ENCODE measurements at regions of chr9 and their contacts with region 1.

Region 1: DNA sequence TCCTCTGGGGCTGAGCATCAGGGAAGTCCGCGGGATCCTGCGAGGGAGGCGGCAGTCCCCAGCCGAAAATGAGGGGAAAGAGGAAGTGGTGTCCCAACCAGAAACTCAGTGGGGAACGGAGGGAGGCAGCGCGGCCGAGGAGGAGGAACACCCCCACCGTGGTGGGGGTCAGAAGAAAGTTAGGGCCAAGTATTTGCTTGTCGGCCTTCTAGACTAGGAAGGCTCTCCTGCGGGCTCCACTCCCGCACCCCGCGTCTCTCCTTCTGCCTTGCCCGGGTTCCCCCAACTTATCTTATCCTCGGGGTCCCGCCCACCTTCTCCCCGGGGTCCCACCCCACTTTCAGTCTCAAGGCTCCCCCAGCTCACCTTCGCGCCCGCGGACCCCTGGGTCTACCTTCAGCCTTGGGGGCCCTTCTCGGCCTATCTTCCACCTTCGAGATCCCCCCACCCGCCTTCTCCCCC is 557 bp upstream of the PHF2 start:
- DNase-seq: peak; percentile 61
- H3K4me3 Mint-ChIP-seq: peak overlapping the region; percentile 88
- H3K27ac Mint-ChIP-seq: peak overlapping the region; percentile 88
- H3K4me1 Mint-ChIP-seq: peaks cover 30% of the 10 kb centered on the region
- H3K27me3 Mint-ChIP-seq: no peaks in the 10 kb centered on the region

Region 2: DNA sequence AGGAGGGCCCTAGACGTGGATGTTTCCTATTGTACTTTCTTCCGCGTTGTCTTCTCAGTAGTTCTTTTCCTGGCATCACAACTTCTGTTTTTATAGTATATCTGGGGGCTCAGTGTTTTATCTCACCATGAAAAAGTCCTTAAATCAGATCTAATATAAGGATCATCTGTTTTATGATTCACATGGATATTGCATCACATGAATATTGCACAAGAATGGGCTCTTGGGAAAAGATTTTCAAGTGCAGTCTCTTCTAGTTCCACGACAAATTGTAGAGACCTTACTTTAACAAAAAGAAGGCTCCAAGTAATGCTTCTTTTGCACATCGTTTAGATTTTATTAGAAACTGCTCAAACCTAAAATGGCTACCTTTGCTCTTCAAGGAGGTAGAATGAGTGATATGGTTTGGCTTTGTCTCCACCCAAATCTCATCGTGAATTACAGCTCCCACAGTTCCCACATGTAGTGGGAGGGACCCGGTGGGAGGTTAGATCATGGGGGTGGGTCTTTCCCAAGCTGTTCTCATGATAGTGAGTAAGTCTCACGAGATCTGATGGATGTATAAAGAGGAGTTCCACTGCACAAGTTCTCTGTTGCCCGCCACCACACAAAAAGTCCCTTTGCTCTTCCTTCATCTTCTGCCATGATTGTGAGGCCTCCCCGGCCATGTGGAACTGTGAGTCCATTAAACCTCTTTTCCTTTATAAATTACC is 178.0 kb before region 1 on chr9:
- CTCF ChIA-PET with region 1: no interaction called
- POLR2A ChIA-PET with region 1: no interaction called
- intact Hi-C with region 1: no loop called
- DNase-seq: no peak
- H3K4me3 Mint-ChIP-seq: no peak overlapping the region
- H3K27ac Mint-ChIP-seq: no peak overlapping the region
- H3K4me1 Mint-ChIP-seq: no peaks in the 10 kb centered on the region
- H3K27me3 Mint-ChIP-seq: no peaks in the 10 kb centered on the region

Region 3: DNA sequence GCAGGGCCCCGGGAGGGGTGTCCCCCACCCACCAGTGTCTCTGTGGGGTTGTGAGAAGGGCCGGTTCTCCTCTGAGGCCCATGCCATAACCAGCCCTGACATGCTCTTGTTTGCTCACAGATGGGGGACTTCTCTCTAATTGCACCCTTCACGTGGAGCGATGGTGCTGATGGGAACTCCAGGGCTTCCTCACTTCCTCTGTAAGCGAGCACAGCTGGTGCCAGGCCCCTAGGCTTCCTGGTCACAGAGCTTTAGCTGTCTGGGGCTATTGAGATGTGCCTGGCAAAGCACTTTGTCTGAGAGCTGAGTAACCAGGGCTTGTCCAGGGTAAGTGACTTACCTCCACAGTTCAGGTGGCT is 36.9 kb after region 1 on chr9:
- CTCF ChIA-PET with region 1: no interaction called
- POLR2A ChIA-PET with region 1: no interaction called
- intact Hi-C with region 1: loop called (anchors 5 kb)
- DNase-seq: peak; percentile 36
- H3K4me3 Mint-ChIP-seq: no peak overlapping the region
- H3K27ac Mint-ChIP-seq: peak overlapping the region; percentile 18
- H3K4me1 Mint-ChIP-seq: peaks cover 18% of the 10 kb centered on the region
- H3K27me3 Mint-ChIP-seq: no peaks in the 10 kb centered on the region

Measured in activated CD4-positive, alpha-beta memory T cell treated with anti-CD3 and anti-CD28 coated beads for 36 hours (primary cell).